BJ (cell line): ENCODE measurements at regions of chr3 and their contacts with region 1.

Region 1: GRCh38 chr3:45656575-45657363 is 32.4 kb upstream of the SACM1L start:
- DNase-seq: peak; percentile 52
- H3K4me3 ChIP-seq: no peak overlapping the region
- H3K27me3 ChIP-seq: no peaks in the 10 kb centered on the region
- CTCF ChIP-seq: peak; percentile 82

Region 2: GRCh38 chr3:45234250-45234649 is 422.5 kb before region 1 on chr3:
- CTCF ChIA-PET with region 1: no interaction called
- POLR2A ChIA-PET with region 1: no interaction called
- DNase-seq: no peak
- H3K4me3 ChIP-seq: no peak overlapping the region
- H3K27me3 ChIP-seq: peaks cover 10% of the 10 kb centered on the region
- CTCF ChIP-seq: no peak

Region 3: DNA sequence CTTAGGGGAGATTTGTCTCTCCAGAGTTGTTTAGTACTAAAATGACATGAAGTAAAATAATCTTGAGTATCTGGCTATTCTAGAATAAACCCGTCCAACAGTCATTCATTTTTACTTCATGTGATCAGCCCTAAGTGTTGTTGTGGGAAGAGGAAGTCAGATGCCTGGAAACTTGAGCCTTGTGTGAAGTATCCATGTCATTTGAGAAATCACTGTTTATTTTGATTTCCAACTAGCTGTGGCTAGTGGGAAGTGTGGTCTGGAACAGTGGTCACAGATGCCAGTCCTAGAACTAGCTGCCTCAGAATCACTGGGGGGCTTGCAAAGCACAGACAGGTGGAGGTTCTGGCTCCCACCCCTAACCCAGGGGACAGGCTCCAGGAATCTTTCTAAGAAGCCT is 139.9 kb before region 1 on chr3:
- CTCF ChIA-PET with region 1: interaction called, 126 read pairs
- POLR2A ChIA-PET with region 1: no interaction called
- DNase-seq: no peak
- H3K4me3 ChIP-seq: no peak overlapping the region
- H3K27me3 ChIP-seq: no peaks in the 10 kb centered on the region
- CTCF ChIP-seq: no peak

Region 4: DNA sequence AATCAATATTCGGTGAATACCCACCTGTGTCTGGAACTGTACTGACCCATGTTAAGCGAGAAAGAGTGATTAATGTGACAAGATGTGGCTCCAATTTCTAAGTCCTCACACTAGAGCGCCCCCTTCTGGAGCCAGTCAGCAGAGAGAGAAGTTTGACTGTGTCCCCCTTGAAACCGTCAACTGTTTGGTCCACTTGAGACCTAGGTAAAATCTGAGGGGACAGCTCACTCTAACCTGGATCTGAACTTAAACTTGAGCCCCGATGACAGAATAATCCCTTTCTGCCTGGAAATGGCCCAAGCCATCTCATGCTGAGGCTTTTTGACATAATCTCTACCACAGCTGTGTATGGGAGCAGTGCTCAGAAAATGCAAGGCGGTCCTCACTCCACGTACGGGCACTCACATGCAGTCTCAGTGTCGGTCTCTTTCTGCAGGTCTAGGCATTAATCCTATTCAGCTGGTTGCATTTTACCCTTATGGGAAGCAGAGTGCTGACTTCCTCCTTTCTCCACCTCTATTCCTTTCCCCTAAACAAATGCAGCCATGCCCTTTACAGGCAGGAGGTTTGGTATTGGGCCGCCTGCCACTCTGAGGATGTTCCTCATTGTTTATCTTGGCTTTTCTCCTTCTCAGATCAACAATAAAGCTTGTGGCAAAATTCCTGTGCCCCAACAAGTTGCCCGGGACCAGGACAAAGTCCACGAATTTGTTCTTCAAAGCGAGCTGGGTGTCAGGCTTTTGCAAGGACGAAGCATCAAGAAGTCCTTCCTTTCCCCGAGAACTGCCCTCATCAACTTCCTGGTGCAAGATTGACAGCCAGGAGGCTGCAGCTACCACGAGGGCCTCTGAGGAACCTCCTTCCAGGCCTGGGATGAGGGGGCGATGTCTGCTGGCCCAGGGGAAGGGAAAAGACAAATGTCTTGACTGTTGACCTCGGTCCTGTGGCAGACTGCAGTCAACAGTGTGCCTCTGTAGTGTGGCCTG is 109.8 kb before region 1 on chr3:
- CTCF ChIA-PET with region 1: interaction called, 13 read pairs
- POLR2A ChIA-PET with region 1: no interaction called
- DNase-seq: no peak
- H3K4me3 ChIP-seq: no peak overlapping the region
- H3K27me3 ChIP-seq: no peaks in the 10 kb centered on the region
- CTCF ChIP-seq: peak; percentile 38

Region 5: DNA sequence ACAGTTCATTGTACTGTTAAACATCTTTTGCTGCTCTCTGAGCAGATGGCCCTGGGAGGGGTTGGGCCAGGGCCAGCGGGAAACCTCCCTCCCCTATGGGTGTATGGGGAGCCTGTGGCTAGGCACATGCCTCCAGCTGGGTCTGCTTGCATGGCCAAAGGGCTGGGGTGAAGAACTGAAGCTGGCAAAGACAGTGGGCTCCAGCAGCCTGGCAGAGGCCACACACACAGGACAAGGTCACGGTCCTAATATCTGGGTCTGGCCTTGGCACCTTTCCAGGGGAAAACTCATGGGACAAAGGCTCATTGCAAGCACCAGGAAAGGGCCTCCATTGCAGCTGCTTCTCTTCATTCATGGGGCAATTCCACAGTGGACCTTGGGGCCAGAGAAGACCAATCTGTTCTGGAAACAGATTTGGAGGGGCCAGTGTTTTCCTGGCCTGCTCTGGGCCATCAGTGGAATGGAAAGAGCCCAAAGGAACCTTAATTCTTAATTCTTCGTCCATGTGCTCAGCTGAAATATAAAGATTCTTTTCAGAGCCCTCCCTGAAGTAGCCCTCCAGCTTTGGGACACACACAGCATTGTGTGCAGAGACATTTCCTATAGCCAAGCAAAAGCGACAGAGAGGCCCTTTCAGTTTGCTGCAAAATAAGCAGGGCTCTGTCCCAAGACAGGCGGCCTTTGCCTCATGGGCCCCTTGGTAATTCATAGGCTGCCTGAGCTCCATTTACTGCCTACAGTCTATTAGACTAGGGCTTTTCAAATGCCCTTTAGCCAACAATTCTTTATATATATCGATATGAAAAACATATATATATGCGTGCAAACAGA is 73.5 kb before region 1 on chr3:
- CTCF ChIA-PET with region 1: interaction called, 17 read pairs
- POLR2A ChIA-PET with region 1: no interaction called
- DNase-seq: no peak
- H3K4me3 ChIP-seq: no peak overlapping the region
- H3K27me3 ChIP-seq: peaks cover 2% of the 10 kb centered on the region; the same call in 1 of the 2 replicates
- CTCF ChIP-seq: no peak

Region 6: GRCh38 chr3:45670991-45671390 is 14.2 kb after region 1 on chr3:
- CTCF ChIA-PET with region 1: interaction called, 19 read pairs
- POLR2A ChIA-PET with region 1: no interaction called
- DNase-seq: peak; percentile 84
- H3K4me3 ChIP-seq: no peak overlapping the region
- H3K27me3 ChIP-seq: no peaks in the 10 kb centered on the region
- CTCF ChIP-seq: no peak

Region 7: DNA sequence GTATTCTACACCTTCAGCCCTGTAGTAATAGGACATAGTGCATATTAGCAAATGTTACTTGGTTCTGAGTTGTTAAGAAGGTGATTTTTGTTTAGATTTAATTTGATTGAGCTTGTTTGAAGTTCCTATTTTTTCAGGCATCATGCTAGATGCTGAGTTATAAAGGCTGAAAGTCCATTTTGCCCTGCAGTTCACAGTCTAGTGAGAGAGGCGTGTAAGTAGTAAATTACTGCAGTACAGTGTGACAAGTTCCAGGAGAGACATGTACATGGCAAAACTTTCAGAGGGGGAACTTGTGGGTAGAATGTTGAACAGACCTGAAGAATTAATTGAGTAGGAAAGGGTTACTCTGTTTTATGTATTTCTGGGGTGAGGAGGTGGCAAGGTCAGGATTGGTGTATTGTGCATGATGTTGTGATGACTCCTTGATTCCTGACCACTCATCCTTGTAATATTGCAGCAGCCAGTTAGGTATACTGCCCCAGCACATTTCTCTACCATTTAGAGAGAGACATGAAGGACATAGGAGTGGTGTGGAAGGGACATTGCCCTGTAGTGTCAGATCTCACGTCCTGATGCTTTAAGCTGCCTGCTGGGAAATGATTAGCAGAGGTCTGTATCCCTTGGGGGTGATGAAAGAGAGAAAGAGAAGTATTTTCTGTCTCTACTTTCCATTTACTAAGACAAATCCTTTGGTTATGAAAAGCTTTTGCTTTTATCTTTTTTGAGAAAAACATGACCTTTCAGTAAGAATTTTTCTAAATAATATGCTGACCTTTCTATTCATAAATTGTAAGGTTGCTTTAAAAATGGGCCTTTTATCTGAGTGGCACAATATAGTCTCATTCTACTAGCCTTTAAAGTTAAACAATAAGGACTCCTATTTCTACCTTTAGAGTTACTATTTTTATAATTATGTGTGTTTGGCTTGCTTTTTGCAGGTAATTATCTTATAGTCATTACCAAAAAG is 49.4 kb after region 1 on chr3:
- CTCF ChIA-PET with region 1: no interaction called
- POLR2A ChIA-PET with region 1: no interaction called
- DNase-seq: no peak
- H3K4me3 ChIP-seq: no peak overlapping the region
- H3K27me3 ChIP-seq: no peaks in the 10 kb centered on the region
- CTCF ChIP-seq: no peak

Region 8: DNA sequence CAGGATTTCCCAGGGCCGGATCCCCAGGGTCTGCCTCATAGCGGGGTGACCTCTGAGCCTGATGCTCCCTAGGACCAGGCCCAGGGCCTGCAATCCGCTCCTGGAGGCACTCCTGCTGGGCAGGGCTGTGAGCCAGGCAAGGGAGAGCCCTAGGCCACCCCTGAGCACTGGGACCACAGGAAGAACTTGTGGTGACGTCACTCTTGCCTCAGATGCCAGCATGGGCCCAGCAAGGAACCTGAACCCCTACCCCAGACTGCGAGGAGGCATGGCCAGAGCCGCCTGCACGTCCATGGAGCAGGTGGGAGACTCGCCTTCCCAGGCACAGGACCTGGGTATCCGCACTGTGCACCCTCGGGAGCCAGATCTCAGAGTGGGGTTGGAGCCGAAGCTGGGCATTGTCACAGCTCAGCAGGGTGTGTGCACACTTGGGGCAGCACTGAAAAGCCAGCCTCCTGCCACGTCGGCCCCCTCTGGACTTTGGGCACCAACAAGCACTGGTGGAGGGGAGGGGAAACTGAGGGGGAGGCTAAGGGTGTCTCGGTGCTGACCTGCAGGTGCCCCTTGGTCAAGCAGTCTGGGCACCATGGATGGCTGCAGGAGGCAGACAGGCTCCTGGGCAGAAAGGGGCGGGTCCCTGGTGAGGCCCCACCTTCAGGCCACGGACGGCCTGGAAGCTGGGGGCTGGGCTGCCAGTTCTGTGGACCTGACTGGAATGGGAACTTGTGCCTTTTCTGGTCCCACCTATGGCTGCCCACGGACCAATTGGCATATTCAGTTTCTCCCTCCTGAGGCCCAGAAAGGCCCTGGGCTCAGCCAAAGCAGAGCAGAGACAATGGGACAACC is 90.2 kb after region 1 on chr3:
- CTCF ChIA-PET with region 1: no interaction called
- POLR2A ChIA-PET with region 1: no interaction called
- DNase-seq: no peak
- H3K4me3 ChIP-seq: no peak overlapping the region
- H3K27me3 ChIP-seq: no peaks in the 10 kb centered on the region
- CTCF ChIP-seq: no peak

Region 9: DNA sequence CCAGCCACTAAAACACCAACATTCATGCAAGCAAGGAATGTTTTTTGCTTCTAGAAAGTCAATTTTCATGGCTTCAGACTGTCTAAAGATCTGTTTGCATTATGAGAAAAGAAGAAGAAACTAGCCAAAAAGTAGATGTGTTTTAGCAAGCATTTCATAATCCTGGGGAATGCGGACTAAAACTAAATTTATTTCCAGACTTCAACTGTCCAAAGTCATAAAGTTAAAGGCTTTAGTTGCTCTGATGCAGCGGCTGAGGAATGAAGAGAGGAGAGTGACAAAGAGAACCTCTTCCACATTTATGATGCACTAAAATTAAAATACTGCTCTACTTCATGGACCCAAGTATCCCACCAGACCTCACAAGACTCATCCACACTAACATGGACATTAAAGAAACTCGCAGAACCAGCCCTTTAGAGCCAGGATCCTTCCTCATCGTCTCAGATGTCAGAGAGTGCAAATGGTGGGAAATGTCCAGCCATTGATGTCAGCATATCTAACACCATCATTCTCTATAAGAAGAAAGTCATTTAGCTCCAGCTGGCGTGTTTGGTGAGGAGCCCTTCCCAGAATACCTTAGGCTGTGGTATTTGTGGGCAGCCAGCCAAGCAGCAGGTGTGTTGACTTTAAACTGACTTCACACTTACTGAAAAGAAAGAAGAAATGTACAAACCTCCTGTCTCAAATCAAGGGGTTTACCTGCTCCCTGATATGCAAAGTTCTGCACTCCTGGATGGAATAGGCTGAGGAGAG is 321.4 kb after region 1 on chr3:
- CTCF ChIA-PET with region 1: no interaction called
- POLR2A ChIA-PET with region 1: no interaction called
- DNase-seq: no peak
- H3K4me3 ChIP-seq: no peak overlapping the region
- H3K27me3 ChIP-seq: no peaks in the 10 kb centered on the region
- CTCF ChIP-seq: no peak